ENCODE measurements at regions of chr7 and their contacts with region 1.

Region 1: GRCh38 chr7:40232242-40232893 is 97.6 kb downstream of the SUGCT start:
- DNase-seq: no peak
- H3K4me3 ChIP-seq: no peak overlapping the region
- H3K27ac ChIP-seq: no peak overlapping the region
- H3K4me1 ChIP-seq: no peaks in the 10 kb centered on the region
- H3K27me3 ChIP-seq: no peaks in the 10 kb centered on the region
- CTCF ChIP-seq: peak in 2 of 3 donors; percentile 30 to 60
- POLR2A ChIP-seq: no peak

Region 2: DNA sequence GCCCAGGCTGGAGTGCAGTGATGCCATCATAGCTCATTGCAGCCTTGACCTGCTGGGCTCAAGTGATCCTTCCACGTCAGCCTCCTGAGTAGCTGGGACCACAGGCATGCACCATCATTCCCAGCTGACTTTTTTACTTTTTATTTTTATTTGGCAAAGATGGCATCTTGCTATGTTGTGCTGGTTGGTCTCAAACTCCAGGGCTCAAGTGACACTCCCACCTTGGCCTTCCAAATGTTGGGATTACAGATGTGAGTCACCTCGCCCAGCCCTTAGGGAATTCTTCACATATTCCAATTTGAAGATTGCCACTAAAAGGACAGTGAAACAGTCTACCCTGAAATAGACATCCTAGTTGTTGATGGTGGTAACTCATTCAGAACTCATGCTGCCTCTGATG is 69.9 kb before region 1 on chr7:
- intact Hi-C with region 1: no loop called
- DNase-seq: no peak
- H3K4me3 ChIP-seq: no peak overlapping the region
- H3K27ac ChIP-seq: no peak overlapping the region
- H3K4me1 ChIP-seq: no peaks in the 10 kb centered on the region
- H3K27me3 ChIP-seq: no peaks in the 10 kb centered on the region
- CTCF ChIP-seq: no peak
- POLR2A ChIP-seq: no peak

Region 3: GRCh38 chr7:41674505-41675023 is 1442.2 kb after region 1 on chr7:
- intact Hi-C with region 1: loop called (anchors 5 kb)
- DNase-seq: no peak
- H3K4me3 ChIP-seq: no peak overlapping the region
- H3K27ac ChIP-seq: no peak overlapping the region
- H3K4me1 ChIP-seq: no peaks in the 10 kb centered on the region
- H3K27me3 ChIP-seq: no peaks in the 10 kb centered on the region
- CTCF ChIP-seq: no peak
- POLR2A ChIP-seq: no peak

Measured in breast epithelium (tissue), 4 donors.